ENCODE measurements at regions of chr20 and their contacts with region 1.

Region 1: DNA sequence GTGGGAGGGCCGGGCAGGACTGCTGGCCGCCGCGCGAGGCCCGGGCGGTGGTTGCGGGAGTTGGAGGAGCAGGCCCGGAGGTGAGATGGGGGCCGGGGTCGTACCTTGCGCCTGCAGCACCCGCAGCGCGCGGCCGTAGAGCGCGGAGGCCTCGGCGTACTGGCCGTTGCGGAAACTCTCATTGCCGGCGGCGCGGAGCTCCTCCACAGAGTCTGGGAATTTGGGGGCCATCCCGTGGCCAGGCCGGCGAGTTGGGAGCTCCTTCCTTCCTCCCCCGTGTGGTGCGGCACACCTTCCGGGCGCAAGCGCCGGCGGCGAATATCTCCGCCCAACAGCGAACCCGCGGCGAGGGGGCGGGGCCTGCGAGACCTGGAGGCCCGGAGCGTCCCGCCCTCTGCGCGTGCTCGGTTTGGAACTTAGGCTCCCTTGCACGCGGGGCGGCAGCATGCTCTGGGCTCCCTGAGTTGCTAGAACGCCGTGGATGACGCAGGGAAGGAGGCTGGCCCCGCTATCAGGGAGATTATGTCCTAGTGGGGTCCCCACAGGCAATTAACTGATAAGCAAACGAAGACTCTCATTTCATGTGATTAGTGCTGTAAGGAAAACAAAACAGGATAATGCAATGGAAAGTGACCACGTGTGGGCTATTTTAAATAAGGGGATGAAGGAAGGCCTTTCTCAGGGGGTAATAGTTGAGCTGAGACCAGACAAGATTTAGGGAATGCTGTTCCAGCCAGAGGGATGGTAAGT is at the start of gene TOMM34:
- DNase-seq: peak; percentile 86 to 98 (median 96)

Region 2: DNA sequence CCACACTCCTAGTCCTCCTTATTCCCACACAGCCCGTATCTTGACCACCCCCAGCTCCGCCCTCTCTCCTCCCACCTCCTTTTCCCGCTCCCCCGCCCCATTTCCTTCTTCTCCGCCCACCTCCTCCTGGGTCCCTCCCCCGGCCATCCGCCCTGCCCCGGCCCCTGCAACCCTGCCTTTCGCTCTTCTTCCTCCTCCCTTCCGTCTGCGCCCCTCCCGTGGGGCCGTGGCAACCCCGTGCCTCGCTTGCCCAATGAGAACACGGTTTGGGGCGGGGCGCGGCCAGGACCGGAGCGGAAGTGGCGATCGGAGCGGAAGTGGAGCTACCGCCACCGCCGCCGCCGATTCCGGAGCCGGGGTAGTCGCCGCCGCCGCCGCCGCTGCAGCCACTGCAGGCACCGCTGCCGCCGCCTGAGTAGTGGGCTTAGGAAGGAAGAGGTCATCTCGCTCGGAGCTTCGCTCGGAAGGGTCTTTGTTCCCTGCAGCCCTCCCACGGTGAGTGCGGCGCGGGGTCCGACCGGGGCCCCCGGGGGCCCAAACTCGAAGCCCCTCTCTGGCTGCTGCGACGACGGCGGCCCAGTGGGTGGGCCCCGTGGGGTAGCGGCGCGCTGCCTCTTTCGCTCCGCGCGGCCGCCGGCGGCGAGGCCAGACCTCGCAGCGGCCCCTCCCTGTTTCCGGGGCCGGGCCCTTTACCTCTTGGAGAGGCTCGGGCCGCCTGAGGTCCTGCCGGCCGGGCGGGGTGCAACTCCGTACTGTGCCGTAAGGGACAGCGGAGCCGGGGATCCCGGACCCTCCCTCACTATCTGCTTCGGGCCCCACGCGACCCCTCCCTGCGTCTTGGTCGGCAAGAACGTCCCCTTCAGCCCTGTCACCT is 74.6 kb before region 1 on chr20 and contains the start of gene YWHAB:
- intact Hi-C with region 1: loop called (anchors 5 kb)
- DNase-seq: peak; percentile 89 to 99 (median 98)

Region 3: GRCh38 chr20:44901974-44902373 is 58.3 kb before region 1 on chr20:
- intact Hi-C with region 1: loop called (anchors 5 kb)
- DNase-seq: peak in 18 of 42 donors; percentile 32 to 78 (median 55)

Region 4: DNA sequence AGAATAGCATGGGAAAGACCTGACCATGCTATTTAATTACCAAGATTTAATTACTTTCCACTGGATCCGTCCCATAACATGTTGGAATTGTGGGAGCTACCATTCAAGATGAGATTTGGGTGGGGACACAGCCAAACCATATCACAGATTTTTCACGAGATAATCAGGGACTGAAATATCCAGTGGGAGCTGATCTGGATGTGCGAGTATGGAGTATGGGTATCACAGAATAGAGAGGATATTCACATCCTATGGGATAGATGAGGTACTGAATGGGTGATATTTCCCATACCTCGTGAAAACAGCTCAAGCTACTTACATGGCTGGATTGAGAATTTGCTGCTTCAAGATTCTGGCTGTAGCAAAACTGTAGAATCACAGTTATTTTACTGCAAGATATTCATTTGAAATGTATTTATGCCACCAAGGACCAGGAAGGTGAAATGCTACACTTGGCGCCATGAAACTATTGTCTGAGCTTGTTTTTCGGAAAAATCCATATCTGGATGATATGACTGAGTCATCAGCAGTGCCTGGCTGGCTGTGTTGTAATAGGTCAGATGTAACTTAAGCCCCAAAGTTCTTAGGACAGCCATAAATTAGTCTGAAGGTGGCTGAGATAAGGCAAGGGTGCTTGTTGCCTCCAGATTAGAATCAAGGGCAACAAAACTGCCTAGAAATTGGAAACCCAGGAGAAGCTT is 110.8 kb after region 1 on chr20:
- intact Hi-C with region 1: no loop called
- DNase-seq: no peak